ENCODE measurements at regions of chr4 and their contacts with region 1.

Region 1: GRCh38 chr4:47167081-47168035 is 136.0 kb downstream of the GABRB1 start:
- H3K4me3 Mint-ChIP-seq: no peak overlapping the region
- H3K27ac Mint-ChIP-seq: no peak overlapping the region
- H3K4me1 Mint-ChIP-seq: peaks cover 18% of the 10 kb centered on the region
- H3K27me3 Mint-ChIP-seq: peaks cover 10% of the 10 kb centered on the region

Region 2: GRCh38 chr4:47122592-47123291 is 44.6 kb before region 1 on chr4:
- intact Hi-C with region 1: no loop called
- H3K4me3 Mint-ChIP-seq: no peak overlapping the region
- H3K27ac Mint-ChIP-seq: peak overlapping the region; percentile 63
- H3K4me1 Mint-ChIP-seq: peaks cover 11% of the 10 kb centered on the region
- H3K27me3 Mint-ChIP-seq: peaks cover 17% of the 10 kb centered on the region

Region 3: GRCh38 chr4:47135210-47135609 is 32.1 kb before region 1 on chr4:
- intact Hi-C with region 1: loop called (anchors 5 kb)
- H3K4me3 Mint-ChIP-seq: no peak overlapping the region
- H3K27ac Mint-ChIP-seq: no peak overlapping the region
- H3K4me1 Mint-ChIP-seq: peaks cover 7% of the 10 kb centered on the region
- H3K27me3 Mint-ChIP-seq: peaks cover 8% of the 10 kb centered on the region